ENCODE measurements at regions of chr13 and their contacts with region 1.

Region 1: DNA sequence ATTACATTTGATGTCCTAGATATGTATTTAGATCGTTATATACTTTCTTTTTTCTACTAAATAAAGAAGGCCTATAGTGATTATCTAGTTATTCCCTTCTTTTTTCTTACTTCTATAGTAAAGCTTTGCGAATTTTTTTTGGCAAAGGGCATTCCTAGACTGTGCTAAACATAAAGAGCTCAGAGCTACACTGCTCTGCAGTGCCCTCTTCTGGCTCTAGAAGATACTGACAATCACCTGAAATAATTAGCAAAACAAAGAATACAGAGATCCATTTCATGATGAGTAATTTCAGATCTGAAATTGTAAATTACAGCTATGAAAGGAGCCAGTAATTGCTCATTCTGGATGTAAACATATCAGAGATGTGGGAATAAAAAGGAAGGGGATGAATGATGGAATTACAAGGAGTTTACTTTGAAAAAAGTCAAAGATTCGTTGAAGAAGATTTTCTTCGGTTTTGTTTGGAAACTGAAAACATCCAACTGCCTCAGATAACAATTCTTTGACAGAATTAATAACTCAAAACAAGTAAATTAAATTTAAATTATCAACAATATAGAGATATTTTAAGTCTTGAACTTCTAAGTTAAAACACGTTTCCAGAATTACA is 288.5 kb downstream of the NALCN start:
- DNase-seq: peak; percentile 71
- H3K4me3 Mint-ChIP-seq: no peak overlapping the region
- H3K27ac Mint-ChIP-seq: no peak overlapping the region
- H3K4me1 Mint-ChIP-seq: peaks cover 2% of the 10 kb centered on the region
- H3K27me3 Mint-ChIP-seq: peaks cover 15% of the 10 kb centered on the region

Region 2: GRCh38 chr13:100573121-100573520 is 554.7 kb before region 1 on chr13:
- intact Hi-C with region 1: loop called (anchors 1 kb)
- DNase-seq: peak; percentile 92
- H3K4me3 Mint-ChIP-seq: no peak overlapping the region
- H3K27ac Mint-ChIP-seq: no peak overlapping the region
- H3K4me1 Mint-ChIP-seq: peaks cover 19% of the 10 kb centered on the region
- H3K27me3 Mint-ChIP-seq: no peaks in the 10 kb centered on the region

Region 3: GRCh38 chr13:101139081-101139480 is 11.2 kb after region 1 on chr13:
- intact Hi-C with region 1: no loop called
- DNase-seq: no peak
- H3K4me3 Mint-ChIP-seq: no peak overlapping the region
- H3K27ac Mint-ChIP-seq: no peak overlapping the region
- H3K4me1 Mint-ChIP-seq: no peaks in the 10 kb centered on the region
- H3K27me3 Mint-ChIP-seq: peaks cover 5% of the 10 kb centered on the region